T-cell (primary cell): ENCODE measurements at regions of chr15 and their contacts with region 1.

Region 1: DNA sequence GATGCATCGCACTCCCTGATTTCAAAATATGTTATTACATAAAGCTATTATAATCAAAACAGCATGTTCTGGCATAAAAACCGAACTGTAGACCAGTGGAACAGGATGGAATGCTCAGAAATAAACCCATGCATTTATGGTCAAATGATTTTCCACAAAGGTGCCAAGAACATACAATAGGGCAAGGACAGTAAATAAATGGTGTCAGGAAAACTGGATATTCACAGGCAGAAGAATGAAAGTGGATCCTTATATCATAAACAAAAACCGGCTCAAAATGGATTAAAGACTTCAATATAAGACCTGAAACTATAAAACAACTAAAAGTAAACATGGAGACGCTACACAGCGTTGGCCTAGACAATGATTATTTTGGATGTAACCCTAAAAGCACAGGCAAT is 22.6 kb downstream of the USP50 start:
- DNase-seq: no peak
- ATAC-seq: no peak
- H3K4me3 ChIP-seq: no peak overlapping the region
- H3K4me3 Mint-ChIP-seq: no peak overlapping the region
- H3K27ac ChIP-seq: no peak overlapping the region
- H3K27ac Mint-ChIP-seq: no peak overlapping the region
- H3K4me1 ChIP-seq: no peaks in the 10 kb centered on the region
- H3K4me1 Mint-ChIP-seq: no peaks in the 10 kb centered on the region
- H3K27me3 ChIP-seq: no peaks in the 10 kb centered on the region
- H3K27me3 Mint-ChIP-seq: no peaks in the 10 kb centered on the region

Region 2: GRCh38 chr15:50431204-50431603 is 92.6 kb before region 1 on chr15:
- CTCF ChIA-PET with region 1: no interaction called
- POLR2A ChIA-PET with region 1: no interaction called
- DNase-seq: no peak
- ATAC-seq: no peak
- H3K4me3 ChIP-seq: no peak overlapping the region
- H3K4me3 Mint-ChIP-seq: no peak overlapping the region
- H3K27ac ChIP-seq: no peak overlapping the region
- H3K27ac Mint-ChIP-seq: no peak overlapping the region
- H3K4me1 ChIP-seq: peaks cover 4 to 7% of the 10 kb centered on the region in 2 experiments
- H3K4me1 Mint-ChIP-seq: peaks cover 70 to 74% (median 72%) of the 10 kb centered on the region in 3 donors
- H3K27me3 ChIP-seq: no peaks in the 10 kb centered on the region
- H3K27me3 Mint-ChIP-seq: no peaks in the 10 kb centered on the region

Region 3: DNA sequence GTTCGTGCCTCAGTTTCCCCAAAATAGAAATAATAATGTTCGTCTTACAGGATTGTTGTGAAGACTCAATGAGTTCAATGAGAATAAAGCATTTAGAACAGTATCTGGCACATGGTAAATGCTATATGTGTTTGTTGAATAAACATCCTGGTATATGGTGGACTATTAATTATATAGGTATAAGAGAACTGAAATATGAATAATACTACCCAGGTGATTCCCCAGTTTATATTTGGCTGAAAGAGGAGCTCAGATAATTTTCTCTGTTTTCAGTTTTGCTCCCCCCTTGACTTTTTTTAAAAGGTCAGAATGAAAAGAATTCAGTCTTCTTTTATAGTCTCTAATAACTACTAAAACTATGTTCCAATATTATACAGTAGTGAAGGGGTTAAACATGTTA is 52.8 kb before region 1 on chr15:
- CTCF ChIA-PET with region 1: interaction called in 1 of 2 experiments, 3 read pairs
- POLR2A ChIA-PET with region 1: interaction called in 1 of 2 experiments, 12 read pairs
- DNase-seq: no peak
- ATAC-seq: no peak
- H3K4me3 ChIP-seq: no peak overlapping the region
- H3K4me3 Mint-ChIP-seq: no peak overlapping the region
- H3K27ac ChIP-seq: no peak overlapping the region
- H3K27ac Mint-ChIP-seq: no peak overlapping the region
- H3K4me1 ChIP-seq: no peaks in the 10 kb centered on the region
- H3K4me1 Mint-ChIP-seq: no peaks in the 10 kb centered on the region
- H3K27me3 ChIP-seq: no peaks in the 10 kb centered on the region
- H3K27me3 Mint-ChIP-seq: no peaks in the 10 kb centered on the region

Region 4: GRCh38 chr15:50840520-50840919 is 316.7 kb after region 1 on chr15:
- CTCF ChIA-PET with region 1: no interaction called
- POLR2A ChIA-PET with region 1: no interaction called
- DNase-seq: no peak
- ATAC-seq: no peak
- H3K4me3 ChIP-seq: no peak overlapping the region
- H3K4me3 Mint-ChIP-seq: no peak overlapping the region
- H3K27ac ChIP-seq: no peak overlapping the region
- H3K27ac Mint-ChIP-seq: no peak overlapping the region
- H3K4me1 ChIP-seq: no peaks in the 10 kb centered on the region
- H3K4me1 Mint-ChIP-seq: no peaks in the 10 kb centered on the region
- H3K27me3 ChIP-seq: no peaks in the 10 kb centered on the region
- H3K27me3 Mint-ChIP-seq: peaks cover 0 to 5% of the 10 kb centered on the region in 2 donors

Region 5: GRCh38 chr15:50968353-50968752 is 444.5 kb after region 1 on chr15:
- CTCF ChIA-PET with region 1: no interaction called
- POLR2A ChIA-PET with region 1: interaction called in 1 of 2 experiments, 10 read pairs
- DNase-seq: no peak
- ATAC-seq: no peak
- H3K4me3 ChIP-seq: no peak overlapping the region
- H3K4me3 Mint-ChIP-seq: no peak overlapping the region
- H3K27ac ChIP-seq: no peak overlapping the region
- H3K27ac Mint-ChIP-seq: no peak overlapping the region
- H3K4me1 ChIP-seq: no peaks in the 10 kb centered on the region
- H3K4me1 Mint-ChIP-seq: peaks cover 0 to 6% (median 1%) of the 10 kb centered on the region in 3 donors
- H3K27me3 ChIP-seq: no peaks in the 10 kb centered on the region
- H3K27me3 Mint-ChIP-seq: no peaks in the 10 kb centered on the region